Spleen (tissue), 13 donors: ENCODE measurements at regions of chr10 and their contacts with region 1.

Region 1: GRCh38 chr10:70880077-70880534 is 8.3 kb downstream of the PCBD1 start:
- DNase-seq: peak; percentile 85
- H3K4me3 ChIP-seq: no peak overlapping the region
- H3K27ac ChIP-seq: no peak overlapping the region
- H3K4me1 ChIP-seq: peaks cover 0 to 6% (median 0%) of the 10 kb centered on the region in 6 donors
- H3K27me3 ChIP-seq: no peaks in the 10 kb centered on the region
- CTCF ChIP-seq: peak; percentile 72 to 93 (median 87)
- POLR2A ChIP-seq: no peak

Region 2: DNA sequence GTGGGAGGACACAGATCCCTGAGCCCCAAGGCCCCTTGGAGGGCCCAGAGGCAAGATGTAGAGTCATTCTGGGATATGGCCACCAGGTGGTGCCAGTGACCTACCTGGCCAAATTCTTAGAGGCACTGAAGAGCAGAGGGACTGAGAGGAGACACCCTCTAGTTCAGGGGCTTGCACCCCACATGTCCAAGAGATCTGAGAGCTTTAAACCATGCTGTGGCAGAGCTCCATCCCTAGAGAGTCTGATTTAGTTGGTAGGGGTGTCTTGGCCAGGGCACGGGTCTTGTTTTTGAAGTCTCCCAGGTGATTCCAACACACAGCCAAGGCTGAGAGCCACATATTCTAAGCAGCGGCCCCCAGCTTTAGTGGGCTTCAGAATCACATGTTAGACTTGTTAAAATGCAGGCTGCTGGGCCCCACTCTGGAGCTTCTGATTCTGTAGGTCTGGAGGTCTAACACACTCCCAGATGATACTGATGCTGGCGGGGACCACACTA is 330.1 kb before region 1 on chr10:
- intact Hi-C with region 1: loop called (anchors 2 kb)
- DNase-seq: peak; percentile 86
- H3K4me3 ChIP-seq: no peak overlapping the region
- H3K27ac ChIP-seq: no peak overlapping the region
- H3K4me1 ChIP-seq: peaks cover 0 to 5% (median 0%) of the 10 kb centered on the region in 6 donors
- H3K27me3 ChIP-seq: no peaks in the 10 kb centered on the region
- CTCF ChIP-seq: peak; percentile 73 to 92 (median 89)
- POLR2A ChIP-seq: no peak

Region 3: GRCh38 chr10:70815504-70816219 is 64.4 kb before region 1 on chr10 and contains the start of gene SGPL1:
- intact Hi-C with region 1: loop called (anchors 5 kb)
- DNase-seq: peak; percentile 97
- H3K4me3 ChIP-seq: peak within 1 kb of the TSS; percentile 55 to 90 (median 70)
- H3K27ac ChIP-seq: peak within 1 kb of the TSS; percentile 74 to 92 (median 86)
- H3K4me1 ChIP-seq: peaks cover 0 to 52% (median 21%) of the 10 kb centered on the region in 6 donors
- H3K27me3 ChIP-seq: no peaks in the 10 kb centered on the region
- CTCF ChIP-seq: peak; percentile 73 to 99 (median 97)
- POLR2A ChIP-seq: peak in 1 of 3 donors; percentile 37
- total RNA-seq, gene SGPL1: 50.4 to 75.1 (median 65.8) TPM

Region 4: DNA sequence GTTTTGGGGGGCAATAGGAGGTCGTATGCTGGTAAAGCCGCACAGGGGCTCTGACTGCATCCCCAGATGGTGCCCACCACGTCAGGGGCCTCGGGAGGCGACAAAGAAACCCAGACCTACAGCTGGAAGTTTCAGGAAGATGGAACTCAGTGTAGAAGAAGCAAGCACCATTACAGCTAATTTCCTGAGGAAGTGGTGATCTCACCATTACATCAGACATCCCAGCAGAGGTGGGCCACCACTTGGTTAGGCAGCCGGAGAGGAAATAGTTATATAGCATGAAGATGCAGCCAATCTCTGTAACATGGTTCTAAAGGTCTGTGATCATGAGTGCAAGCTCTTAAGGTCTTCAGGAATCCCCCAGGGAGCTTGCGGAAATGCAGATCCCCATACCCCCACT is 135.6 kb after region 1 on chr10:
- intact Hi-C with region 1: no loop called
- DNase-seq: no peak
- H3K4me3 ChIP-seq: no peak overlapping the region
- H3K27ac ChIP-seq: no peak overlapping the region
- H3K4me1 ChIP-seq: no peaks in the 10 kb centered on the region
- H3K27me3 ChIP-seq: peaks cover 0 to 3% (median 0%) of the 10 kb centered on the region in 7 donors
- CTCF ChIP-seq: no peak
- POLR2A ChIP-seq: no peak